ENCODE measurements at regions of chr5 and their contacts with region 1.

Region 1: DNA sequence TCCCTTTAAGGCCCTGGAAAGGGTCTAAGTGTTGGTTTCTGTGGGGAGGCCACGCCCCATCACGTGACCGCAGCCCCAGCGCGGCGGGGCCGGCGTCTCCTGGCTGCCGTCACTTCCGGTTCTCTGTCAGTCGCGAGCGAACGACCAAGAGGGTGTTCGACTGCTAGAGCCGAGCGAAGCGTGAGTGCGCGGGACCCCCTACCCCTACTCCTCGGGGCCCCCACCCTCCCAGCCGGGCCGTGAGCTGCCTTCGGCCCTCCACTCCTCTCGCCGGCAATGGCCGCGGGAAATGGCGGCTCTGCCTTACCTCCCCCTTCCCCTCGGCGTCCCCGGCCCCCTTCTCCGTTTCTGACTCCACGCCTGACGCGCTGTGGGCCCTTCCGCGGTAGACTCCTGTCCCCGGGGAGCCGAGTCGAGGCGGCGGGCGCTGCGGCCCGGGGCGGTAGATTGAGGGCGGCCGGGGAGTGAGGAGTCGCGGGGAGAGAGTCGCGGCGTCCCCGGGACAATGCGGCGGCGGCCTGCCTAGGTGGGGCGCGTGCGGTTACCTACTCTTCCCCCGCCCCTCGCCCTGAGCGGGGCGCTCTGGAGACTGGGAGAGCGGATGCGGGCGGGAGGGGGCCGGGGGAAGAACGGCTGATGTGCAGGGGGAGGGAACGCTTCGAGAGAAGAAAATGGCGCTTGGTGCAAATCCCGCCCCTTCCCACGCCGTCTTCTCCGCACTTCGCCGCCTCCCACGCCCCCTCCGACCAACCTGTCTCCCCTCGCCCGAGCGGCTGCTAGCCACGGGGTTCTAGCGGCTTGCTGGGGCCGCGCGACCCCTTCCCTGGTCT is at the start of gene SUB1:
- DNase-seq: peak; percentile 91
- H3K4me3 ChIP-seq: peak within 1 kb of the TSS; percentile 90
- H3K27ac ChIP-seq: peak within 1 kb of the TSS; percentile 65
- H3K4me1 ChIP-seq: peaks cover 40% of the 10 kb centered on the region
- CTCF ChIP-seq: peak; percentile 26; the same call in 1 of the 2 replicates
- total RNA-seq, gene SUB1: 40.3 and 56.9 TPM in 2 replicates

Region 2: GRCh38 chr5:32174011-32174870 is 411.4 kb before region 1 on chr5 and contains the start of gene GOLPH3:
- CTCF ChIA-PET with region 1: interaction called, 3 read pairs
- POLR2A ChIA-PET with region 1: no interaction called
- intact Hi-C with region 1: loop called (anchors 5 kb)
- DNase-seq: peak; percentile 93
- H3K4me3 ChIP-seq: peak within 1 kb of the TSS; percentile 93
- H3K27ac ChIP-seq: peak within 1 kb of the TSS; percentile 75
- H3K4me1 ChIP-seq: peaks cover 27% of the 10 kb centered on the region
- CTCF ChIP-seq: no peak
- total RNA-seq, gene GOLPH3: 25.7 and 35.9 TPM in 2 replicates

Region 3: DNA sequence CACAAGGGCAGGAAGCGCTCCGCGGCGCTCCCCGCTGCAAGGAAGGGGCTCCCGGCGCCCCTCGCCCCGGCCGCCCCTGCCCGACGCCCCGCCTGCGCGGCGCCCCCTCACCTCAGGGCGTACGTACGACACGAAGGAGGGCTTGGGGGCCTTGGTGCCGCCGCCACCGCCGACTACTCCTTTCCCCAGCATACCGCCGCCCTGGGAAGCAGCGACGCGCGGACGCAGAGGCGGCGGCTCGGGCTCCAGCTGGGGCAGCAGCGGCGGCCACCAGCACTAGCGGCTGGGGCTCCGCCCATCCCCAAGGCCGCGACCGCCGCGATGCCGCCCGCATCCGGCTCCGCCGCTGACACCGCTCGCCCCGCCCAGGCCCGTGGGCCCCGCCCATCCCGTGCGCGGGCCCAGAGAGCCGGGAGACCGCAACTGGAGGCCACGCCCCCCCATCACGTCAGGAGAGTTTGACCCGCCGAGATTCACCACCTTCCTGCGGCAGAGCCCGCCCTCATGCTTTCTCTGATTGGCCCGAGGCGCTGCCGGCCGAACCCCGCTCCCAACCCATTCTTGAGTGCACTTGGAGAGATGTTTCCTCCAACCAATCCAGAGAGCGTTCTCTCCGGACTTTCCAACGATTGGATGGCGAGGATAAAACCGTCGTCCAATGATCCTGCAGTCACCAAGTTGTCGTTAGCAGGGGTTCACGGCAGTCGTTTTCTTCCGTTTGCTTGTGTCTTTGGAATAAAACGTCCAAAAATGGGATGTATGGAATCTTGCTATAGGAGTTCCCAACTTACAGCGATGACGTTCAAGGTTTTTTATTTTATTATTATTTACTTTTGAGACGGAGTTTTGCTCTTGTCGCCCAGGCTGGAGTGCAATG is 272.8 kb before region 1 on chr5 and contains the start of gene MTMR12:
- CTCF ChIA-PET with region 1: no interaction called
- POLR2A ChIA-PET with region 1: no interaction called
- intact Hi-C with region 1: loop called (anchors 5 kb)
- DNase-seq: peak; percentile 99
- H3K4me3 ChIP-seq: peak within 1 kb of the TSS; percentile 90
- H3K27ac ChIP-seq: peak within 1 kb of the TSS; percentile 85
- H3K4me1 ChIP-seq: peaks cover 38% of the 10 kb centered on the region
- CTCF ChIP-seq: 0 out of 2 replicates have a peak, but pooled peaks have one; percentile 15
- total RNA-seq, gene MTMR12: 32.5 and 33.6 TPM in 2 replicates

Region 4: DNA sequence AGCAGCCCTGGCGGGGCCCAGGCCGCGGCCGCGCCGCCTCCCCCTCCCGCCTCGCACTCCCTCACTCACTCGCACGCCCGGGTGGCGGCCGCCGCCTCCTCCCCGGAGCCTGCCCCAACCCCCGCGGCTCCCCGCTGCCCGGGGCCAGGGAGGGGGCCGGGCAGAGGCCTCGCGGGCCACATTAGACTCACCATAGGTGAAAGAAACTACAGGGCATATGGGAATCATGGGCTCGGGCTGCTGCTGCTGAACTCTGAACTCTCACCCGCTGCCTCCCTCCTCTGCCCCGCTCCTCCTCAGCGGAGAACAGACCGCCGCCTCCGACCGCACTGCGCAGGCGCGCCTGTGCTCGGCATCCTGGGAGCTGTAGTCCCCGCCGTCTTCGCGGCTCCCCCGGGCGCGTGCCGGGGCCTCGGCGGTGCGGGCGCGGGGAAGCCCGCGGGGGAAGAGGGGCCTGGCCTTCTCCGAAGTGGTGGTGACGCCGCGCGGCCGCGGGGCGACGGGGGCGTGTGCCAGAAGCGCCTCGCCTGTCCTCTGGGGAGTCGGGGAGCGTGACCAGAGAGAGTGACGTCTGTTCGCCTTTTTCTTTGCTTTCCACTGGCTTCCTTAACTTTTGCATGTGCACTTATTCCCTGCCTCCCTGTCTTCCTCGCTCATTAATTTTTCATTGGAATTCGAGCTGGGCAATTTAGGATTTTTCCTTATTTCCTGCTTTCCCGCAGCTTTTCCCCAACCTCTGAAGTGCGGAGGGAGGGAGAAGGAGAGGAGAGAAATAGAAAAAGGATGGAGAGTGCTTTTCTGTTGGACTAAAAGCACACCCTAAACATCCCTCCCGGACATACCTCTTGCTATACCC is 141.0 kb before region 1 on chr5 and contains the start of gene ZFR:
- CTCF ChIA-PET with region 1: no interaction called
- POLR2A ChIA-PET with region 1: interaction called, 3 read pairs
- intact Hi-C with region 1: loop called (anchors 2 kb)
- DNase-seq: peak; percentile 90
- H3K4me3 ChIP-seq: peak within 1 kb of the TSS; percentile 85
- H3K27ac ChIP-seq: peak within 1 kb of the TSS; percentile 63
- H3K4me1 ChIP-seq: peaks cover 17% of the 10 kb centered on the region
- CTCF ChIP-seq: no peak
- total RNA-seq, gene ZFR: 52.7 and 54.8 TPM in 2 replicates

Region 5: DNA sequence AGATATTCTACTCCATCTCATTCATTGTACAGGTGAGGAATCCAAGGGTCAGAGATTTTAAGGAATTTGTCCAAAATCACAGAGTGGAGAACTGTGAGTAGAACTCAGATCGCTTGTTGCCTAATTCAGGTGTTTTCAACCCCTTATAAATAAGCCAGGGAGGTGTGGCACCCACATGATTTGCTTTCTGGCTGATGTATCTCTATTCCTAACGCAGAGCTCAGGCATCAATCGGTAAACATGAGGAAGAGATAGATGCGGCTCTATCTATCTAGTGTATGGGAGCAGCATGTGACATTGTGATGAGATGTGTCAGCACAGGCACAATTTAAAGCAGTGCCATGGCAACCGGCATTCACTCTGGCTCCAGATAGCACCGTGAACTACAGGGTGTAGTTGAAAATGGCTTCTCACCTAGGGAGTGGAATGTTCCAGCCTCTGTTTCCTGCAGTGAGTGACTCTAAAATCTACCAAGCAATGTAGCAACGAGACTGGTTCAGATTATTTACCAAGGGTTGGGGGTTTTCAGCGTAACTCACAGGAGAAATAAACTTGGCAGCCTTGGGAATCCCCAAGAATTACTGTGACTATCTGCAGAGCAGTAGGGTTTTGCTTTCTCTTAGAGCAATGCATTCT is 53.7 kb before region 1 on chr5:
- CTCF ChIA-PET with region 1: interaction called, 4 read pairs
- POLR2A ChIA-PET with region 1: interaction called, 7 read pairs
- intact Hi-C with region 1: loop called (anchors 1 kb)
- DNase-seq: peak; percentile 18
- H3K4me3 ChIP-seq: peak overlapping the region; percentile 48
- H3K27ac ChIP-seq: peak overlapping the region; percentile 46
- H3K4me1 ChIP-seq: peaks cover 27% of the 10 kb centered on the region
- CTCF ChIP-seq: no peak

Region 6: DNA sequence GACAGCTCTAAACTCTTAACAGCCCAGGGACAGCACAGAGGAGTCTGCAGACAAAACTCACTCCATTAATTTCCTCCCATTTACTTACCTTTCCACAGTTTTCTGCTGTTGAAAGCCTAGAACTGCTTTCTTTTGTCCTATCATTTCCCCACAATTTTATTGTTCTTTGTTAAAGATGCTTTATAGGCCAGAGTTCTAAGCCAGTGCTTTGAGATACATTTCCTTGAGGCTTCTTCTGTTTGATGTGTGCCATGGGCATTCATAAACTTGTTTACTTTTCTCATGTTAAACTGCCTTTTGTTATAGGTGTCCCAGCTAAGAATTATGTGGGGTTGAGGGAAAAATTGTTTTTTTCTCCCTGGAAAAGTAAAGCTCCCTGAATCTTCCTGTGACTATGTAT is 26.2 kb before region 1 on chr5:
- CTCF ChIA-PET with region 1: no interaction called
- POLR2A ChIA-PET with region 1: no interaction called
- intact Hi-C with region 1: no loop called
- DNase-seq: no peak
- H3K4me3 ChIP-seq: no peak overlapping the region
- H3K27ac ChIP-seq: no peak overlapping the region
- H3K4me1 ChIP-seq: no peaks in the 10 kb centered on the region
- CTCF ChIP-seq: no peak

Region 7: GRCh38 chr5:32572778-32573480 is 12.7 kb before region 1 on chr5:
- CTCF ChIA-PET with region 1: no interaction called
- POLR2A ChIA-PET with region 1: interaction called, 4 read pairs
- intact Hi-C with region 1: loop called (anchors 1 kb)
- DNase-seq: peak; percentile 85
- H3K4me3 ChIP-seq: no peak overlapping the region
- H3K27ac ChIP-seq: no peak overlapping the region
- H3K4me1 ChIP-seq: peaks cover 18% of the 10 kb centered on the region
- CTCF ChIP-seq: no peak